ENCODE measurements at regions of chr1 and their contacts with region 1.

Region 1: DNA sequence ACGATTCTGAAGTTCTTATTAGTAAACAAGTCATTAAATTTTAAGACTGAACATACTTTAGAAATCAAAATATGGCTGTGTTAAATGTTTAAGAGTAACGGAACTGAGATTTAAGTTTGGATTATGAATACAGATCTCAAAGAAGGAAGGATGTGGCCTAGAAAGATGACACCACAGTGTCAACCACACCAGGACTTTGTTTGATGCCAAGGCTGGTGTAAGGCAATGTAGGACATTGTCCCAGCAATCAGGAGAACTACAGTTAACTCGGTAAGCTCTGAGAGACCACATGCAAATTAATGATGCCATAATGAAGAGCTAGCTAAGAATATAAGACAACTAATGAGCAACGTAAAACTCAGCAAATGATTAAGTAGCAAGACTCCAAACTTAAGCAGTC is 932.9 kb downstream of the ADGRL2 start:
- DNase-seq: no peak
- H3K4me3 ChIP-seq: no peak overlapping the region
- H3K27ac ChIP-seq: no peak overlapping the region
- H3K4me1 ChIP-seq: no peaks in the 10 kb centered on the region
- H3K27me3 ChIP-seq: no peaks in the 10 kb centered on the region
- CTCF ChIP-seq: no peak

Region 2: DNA sequence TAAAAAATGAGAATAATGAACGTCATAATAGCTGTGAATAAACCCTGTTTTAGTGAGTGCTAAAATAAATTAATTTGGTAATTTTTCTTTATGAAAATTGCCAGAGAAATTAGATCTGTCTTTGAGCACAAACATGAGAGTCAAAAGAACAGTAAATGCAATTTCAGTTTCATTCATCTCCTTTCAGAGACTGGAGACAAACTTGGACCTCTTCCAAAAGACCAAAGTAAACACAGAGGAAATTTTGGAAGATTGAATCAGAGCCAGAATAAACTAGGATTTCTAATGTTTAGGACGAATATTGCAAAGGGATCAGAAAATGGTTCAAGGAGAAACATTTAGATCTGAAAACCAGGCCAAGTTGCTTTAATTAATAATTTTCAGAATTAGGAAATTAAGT is 622.8 kb before region 1 on chr1:
- CTCF ChIA-PET with region 1: no interaction called
- POLR2A ChIA-PET with region 1: no interaction called
- intact Hi-C with region 1: no loop called
- DNase-seq: no peak
- H3K4me3 ChIP-seq: no peak overlapping the region
- H3K27ac ChIP-seq: no peak overlapping the region
- H3K4me1 ChIP-seq: no peaks in the 10 kb centered on the region
- H3K27me3 ChIP-seq: no peaks in the 10 kb centered on the region
- CTCF ChIP-seq: no peak

Region 3: GRCh38 chr1:82837766-82838465 is 104.3 kb after region 1 on chr1:
- CTCF ChIA-PET with region 1: no interaction called
- POLR2A ChIA-PET with region 1: no interaction called
- intact Hi-C with region 1: no loop called
- DNase-seq: no peak
- H3K4me3 ChIP-seq: no peak overlapping the region
- H3K27ac ChIP-seq: no peak overlapping the region
- H3K4me1 ChIP-seq: no peaks in the 10 kb centered on the region; the same call in 1 of the 2 replicates
- H3K27me3 ChIP-seq: no peaks in the 10 kb centered on the region
- CTCF ChIP-seq: no peak

Region 4: DNA sequence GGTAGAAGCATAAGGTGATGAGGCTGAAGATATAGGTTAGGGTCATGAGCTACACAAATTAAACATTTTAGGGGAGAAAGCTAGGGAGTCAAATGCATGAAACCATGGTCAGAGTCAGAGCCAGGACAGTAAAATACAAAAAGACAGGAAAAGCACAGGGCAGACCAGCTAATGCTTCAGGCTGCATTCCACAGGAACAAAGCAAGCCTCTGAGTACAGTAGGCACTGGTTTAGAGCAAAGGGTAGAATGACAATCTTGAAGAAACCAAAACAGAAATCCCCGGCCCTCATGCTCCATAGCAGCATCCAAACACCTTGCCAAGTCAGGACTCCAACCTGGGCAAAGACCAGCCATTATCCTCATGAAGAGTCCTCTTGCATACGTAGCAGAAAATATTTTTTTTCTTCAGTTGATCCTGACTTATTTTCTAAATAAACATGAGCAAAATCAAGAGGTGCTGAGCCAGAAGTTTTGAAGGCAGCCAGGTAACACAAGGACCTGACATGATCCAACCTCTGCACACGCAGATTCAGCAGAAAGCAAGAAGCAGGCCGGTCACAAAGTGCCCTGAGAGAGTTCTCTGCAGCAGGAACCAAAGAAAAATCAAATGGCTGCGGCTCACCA is 992.2 kb after region 1 on chr1:
- CTCF ChIA-PET with region 1: no interaction called
- POLR2A ChIA-PET with region 1: interaction called, 10 read pairs
- intact Hi-C with region 1: no loop called
- DNase-seq: no peak
- H3K4me3 ChIP-seq: no peak overlapping the region
- H3K27ac ChIP-seq: no peak overlapping the region
- H3K4me1 ChIP-seq: no peaks in the 10 kb centered on the region
- H3K27me3 ChIP-seq: no peaks in the 10 kb centered on the region
- CTCF ChIP-seq: no peak

Measured in PC-9 (cell line).